GM13977 (cell line): ENCODE measurements at regions of chr1 and their contacts with region 1.

Region 1: DNA sequence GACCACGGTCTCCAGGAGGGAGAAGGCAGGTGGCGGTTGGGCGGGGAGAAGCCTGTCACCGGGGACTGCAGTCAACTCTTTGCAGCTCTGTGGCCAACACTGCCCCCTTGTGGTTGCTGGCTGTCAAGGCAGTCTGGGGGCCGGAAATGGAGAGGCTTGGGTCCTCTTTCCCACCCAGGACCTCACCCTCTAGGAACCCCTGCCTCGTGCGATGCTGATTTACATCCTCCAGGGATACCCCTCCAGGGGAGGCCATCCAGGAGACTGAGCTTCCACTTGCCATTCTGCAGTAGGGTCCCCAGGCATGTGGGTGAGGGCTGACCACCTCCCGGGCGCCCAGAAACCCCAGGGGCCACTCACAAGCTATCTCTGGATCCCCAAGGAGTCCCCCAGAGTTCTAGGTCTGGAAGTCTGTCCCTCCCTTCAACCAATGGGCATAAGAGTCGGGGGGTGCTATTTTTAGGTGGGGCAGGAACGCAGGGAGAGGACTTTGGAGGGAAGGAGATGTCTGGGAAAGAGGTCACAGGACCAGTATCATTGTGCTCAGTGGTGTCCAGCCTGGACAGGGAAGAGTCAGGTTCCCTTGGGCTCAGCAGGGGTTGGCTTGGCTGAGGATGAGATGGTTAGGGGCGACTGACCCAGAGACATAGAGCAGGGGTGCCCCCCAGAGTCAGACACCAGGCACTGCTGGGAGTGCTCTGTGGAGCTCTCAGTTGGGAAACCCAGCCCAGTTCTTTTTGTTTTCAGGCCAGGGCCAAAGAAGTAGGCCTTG is 7.1 kb upstream of the GPR61 start:
- DNase-seq: peak; percentile 84
- CTCF ChIP-seq: peak; percentile 98

Region 2: GRCh38 chr1:108152782-108153222 is 1379.7 kb before region 1 on chr1:
- in situ Hi-C with region 1: no loop called
- DNase-seq: no peak
- CTCF ChIP-seq: no peak

Region 3: DNA sequence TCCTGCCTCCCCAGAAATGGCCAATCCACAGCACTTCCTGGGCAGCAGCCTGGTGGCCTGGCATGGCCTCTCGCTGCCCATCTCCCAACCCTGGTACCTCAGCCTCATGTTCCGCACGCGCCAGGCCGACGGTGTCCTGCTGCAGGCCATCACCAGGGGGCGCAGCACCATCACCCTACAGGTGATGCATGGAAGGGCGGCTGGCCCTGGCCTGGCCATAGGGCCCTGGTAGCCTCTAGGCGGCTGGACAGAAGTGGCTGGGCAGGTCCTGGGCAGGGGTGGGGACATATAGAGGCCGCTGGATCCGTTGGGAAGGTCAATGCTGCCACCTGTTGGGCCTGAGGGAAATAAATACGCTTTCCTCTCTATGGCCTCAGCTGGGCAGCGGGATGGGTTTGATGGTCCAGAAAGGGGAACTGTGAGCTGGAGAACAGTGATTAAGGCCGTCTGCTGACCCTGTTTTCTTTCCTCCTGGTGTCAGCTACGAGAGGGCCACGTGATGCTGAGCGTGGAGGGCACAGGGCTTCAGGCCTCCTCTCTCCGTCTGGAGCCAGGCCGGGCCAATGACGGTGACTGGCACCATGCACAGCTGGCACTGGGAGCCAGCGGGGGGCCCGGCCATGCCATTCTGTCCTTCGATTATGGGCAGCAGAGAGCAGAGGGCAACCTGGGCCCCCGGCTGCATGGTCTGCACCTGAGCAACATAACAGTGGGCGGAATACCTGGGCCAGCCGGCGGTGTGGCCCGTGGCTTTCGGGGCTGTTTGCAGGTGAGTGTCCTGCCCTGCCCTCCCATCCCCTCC is 268.8 kb before region 1 on chr1:
- in situ Hi-C with region 1: loop called (anchors 10 kb)
- DNase-seq: peak; percentile 91
- CTCF ChIP-seq: peak; percentile 97

Region 4: DNA sequence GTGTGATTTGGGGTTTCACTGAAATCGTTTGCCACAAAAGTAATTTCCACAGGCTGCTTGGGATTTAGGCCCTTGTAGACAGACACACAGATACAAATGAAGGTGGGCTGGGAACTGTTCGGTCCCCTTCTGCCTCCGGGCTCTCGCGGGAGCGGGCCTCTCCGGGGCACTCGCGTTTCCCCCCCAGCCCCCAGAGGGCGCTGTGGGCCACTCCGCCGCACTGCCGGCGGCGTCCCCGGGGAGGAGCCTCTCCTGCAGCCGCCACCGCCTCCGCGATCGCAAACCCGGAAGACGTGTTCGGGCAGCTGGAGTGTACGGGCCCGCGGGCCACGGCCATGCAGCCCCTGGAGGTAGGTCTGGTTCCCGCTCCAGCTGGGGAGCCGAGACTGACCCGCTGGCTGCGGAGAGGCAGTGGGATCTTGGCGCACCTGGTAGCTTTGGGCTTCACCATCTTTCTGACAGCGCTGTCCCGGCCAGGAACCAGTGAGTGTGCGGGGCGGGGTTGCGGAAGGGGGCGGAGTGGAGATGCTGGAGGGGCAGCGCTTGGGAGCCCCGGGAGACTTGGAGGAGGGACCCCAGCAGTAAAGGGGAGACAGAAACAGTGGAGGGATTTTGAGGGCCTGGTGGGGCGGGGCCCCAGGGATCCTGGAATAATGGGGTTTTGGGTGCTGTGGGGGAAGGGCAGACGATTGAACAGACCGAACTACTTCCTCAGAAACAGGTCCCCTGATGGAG is 38.6 kb before region 1 on chr1 and contains the start of gene CYB561D1:
- in situ Hi-C with region 1: loop called (anchors 5 kb)
- DNase-seq: peak; percentile 93
- CTCF ChIP-seq: peak; percentile 94

Region 5: GRCh38 chr1:109630081-109630897 is 97.7 kb after region 1 on chr1:
- in situ Hi-C with region 1: no loop called
- DNase-seq: no peak
- CTCF ChIP-seq: peak; percentile 40